Naive thymus-derived CD4-positive, alpha-beta T cell (primary cell): ENCODE measurements at regions of chr1 and their contacts with region 1.

Region 1: DNA sequence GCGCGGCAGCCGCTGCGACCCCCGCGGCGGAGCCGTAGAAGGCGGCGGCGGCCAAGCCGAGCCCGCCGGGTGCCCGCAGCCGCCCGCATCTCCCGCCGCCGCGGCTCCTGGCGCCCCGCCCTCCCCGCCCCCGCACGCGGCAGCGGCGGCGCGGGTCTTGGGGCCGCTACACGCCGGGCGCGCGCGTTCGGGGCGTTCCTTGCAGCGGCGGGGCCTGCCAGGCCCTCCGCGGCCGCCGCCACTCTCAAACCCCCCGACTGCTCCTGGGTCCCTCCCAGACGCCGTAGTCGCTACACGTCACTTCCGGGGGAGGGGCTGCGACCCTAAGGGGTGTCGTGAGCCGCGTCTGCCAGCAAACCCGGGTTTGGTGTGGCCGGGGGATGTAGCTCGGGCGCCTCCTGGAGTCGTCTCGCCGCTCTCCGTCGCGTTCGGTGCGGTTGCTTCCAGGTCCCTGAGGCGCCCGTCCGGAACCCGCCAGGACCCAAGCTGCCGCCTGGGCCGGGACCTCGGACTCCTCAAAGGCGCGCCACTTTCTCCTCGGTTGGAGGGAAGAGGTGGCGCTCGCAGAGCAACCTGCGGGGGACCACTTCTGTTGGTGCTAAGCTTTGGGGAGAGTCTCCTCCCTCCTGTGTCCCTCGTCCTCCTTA is at the start of gene ELK4:
- DNase-seq: peak; percentile 98 to 100 (median 99)
- ATAC-seq: peak; percentile 92
- H3K4me3 ChIP-seq: peak within 1 kb of the TSS; percentile 84
- H3K4me3 Mint-ChIP-seq: peak within 1 kb of the TSS; percentile 85 to 100 (median 94)
- H3K27ac ChIP-seq: peak within 1 kb of the TSS; percentile 95
- H3K27ac Mint-ChIP-seq: peak within 1 kb of the TSS; percentile 89 to 99 (median 97)
- H3K4me1 ChIP-seq: peaks cover 20 to 33% of the 10 kb centered on the region in 2 donors
- H3K4me1 Mint-ChIP-seq: peaks cover 23 to 51% (median 37%) of the 10 kb centered on the region in 7 donors
- H3K27me3 ChIP-seq: no peaks in the 10 kb centered on the region
- H3K27me3 Mint-ChIP-seq: peaks cover 0 to 7% (median 0%) of the 10 kb centered on the region in 5 donors
- total RNA-seq, gene ELK4: 104 to 250 (median 156) TPM

Region 2: DNA sequence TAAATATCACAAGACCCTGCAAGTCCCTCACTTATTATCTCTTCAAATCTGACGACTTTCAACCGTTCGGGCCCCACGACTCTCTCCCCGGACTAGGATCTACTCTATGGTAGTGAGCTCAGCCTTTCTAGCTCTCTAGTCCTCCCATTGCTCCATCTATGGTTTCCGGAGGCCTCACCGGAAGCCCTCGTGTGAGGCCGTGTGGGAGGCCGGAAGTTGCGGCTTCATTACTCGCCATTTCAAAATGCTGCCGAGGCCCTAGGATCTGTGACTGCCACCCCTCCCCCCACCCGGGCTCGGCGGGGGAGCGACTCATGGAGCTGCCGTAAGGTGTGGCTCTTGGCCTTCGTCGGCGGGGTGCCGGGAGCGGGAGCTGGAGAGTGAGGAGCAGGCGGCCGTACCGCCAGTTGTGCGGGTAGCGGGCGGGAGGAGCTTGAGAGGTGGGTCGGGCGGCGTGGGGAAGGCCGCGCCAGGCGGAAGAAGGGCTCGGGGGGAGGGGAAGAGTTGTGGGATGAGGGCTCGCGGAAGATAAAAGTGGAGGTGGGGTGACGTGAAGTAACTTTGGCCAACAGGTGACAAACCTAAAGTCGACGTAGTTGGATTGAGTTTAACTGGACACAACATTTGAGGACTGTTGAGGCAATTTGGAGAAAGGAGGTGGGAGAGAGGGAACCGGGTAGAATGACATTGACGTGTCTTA is 1115.5 kb before region 1 on chr1 and contains the start of gene MDM4:
- CTCF ChIA-PET with region 1: no interaction called
- POLR2A ChIA-PET with region 1: interaction called, 4 read pairs
- intact Hi-C with region 1: loop called in 1 of 2 experiments (anchors 10 kb)
- DNase-seq: peak; percentile 86 to 94 (median 93)
- ATAC-seq: peak; percentile 87
- H3K4me3 ChIP-seq: peak within 1 kb of the TSS; percentile 91
- H3K4me3 Mint-ChIP-seq: peak within 1 kb of the TSS in 1 of 10 donors; percentile 87
- H3K27ac ChIP-seq: peak within 1 kb of the TSS; percentile 95
- H3K27ac Mint-ChIP-seq: peak within 1 kb of the TSS in 6 of 9 donors; percentile 68 to 98 (median 80)
- H3K4me1 ChIP-seq: peaks cover 64 to 67% of the 10 kb centered on the region in 2 donors
- H3K4me1 Mint-ChIP-seq: peaks cover 32 to 78% (median 66%) of the 10 kb centered on the region in 7 donors
- H3K27me3 ChIP-seq: no peaks in the 10 kb centered on the region
- H3K27me3 Mint-ChIP-seq: no peaks in the 10 kb centered on the region
- total RNA-seq, gene MDM4: 107 to 278 (median 268) TPM

Region 3: DNA sequence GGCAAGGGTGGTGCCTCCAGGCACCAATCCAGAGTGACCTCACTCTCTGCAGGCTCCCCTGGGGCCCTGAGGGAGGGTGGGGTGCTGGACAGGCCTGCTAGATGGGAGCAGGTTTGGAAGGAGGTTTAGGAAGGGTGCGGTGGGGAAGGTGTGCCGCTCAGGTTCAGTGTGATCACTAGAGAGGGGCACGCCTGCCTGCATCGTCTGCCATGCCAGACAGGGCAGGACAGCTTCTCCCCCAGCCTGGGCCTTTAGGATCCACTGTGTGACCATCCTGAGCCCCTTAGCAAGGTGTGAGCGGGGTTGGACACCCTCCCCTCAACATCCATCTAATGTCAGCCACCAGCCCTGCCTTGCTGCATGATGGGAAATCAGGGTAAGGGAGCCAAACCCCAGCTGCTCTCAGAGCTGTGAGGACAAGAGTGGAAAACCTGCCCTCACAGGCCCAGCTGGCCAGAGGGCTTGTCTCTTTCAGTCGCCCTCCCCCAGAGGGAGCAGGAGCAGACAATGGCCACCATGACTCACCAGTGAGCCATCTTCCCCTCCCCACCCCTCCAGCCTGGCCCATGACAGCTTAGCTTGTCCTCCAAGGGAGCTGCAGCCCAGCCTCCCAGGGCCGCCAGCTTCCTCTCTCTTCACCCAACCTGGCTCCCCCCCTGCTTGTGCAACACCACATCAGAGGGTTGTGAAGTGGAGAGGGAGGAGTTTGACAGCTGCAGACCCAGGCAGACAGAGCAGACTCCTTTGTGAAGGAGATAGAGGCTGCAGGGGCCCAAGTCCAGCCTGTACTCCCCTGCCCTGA is 347.3 kb before region 1 on chr1:
- CTCF ChIA-PET with region 1: no interaction called
- POLR2A ChIA-PET with region 1: interaction called, 3 read pairs
- intact Hi-C with region 1: loop called (anchors 1 to 2 kb)
- DNase-seq: peak; percentile 65 to 92 (median 89)
- ATAC-seq: peak; percentile 79
- H3K4me3 ChIP-seq: peak overlapping the region; percentile 51
- H3K4me3 Mint-ChIP-seq: peak overlapping the region; percentile 63 to 89 (median 80)
- H3K27ac ChIP-seq: peak overlapping the region; percentile 83
- H3K27ac Mint-ChIP-seq: peak overlapping the region; percentile 90 to 99 (median 97)
- H3K4me1 ChIP-seq: peaks cover 61 to 78% of the 10 kb centered on the region in 2 donors
- H3K4me1 Mint-ChIP-seq: peaks cover 67 to 95% (median 80%) of the 10 kb centered on the region in 7 donors
- H3K27me3 ChIP-seq: no peaks in the 10 kb centered on the region
- H3K27me3 Mint-ChIP-seq: peaks cover 0 to 20% (median 0%) of the 10 kb centered on the region in 5 donors

Region 4: GRCh38 chr1:205610036-205610435 is 21.8 kb before region 1 on chr1:
- CTCF ChIA-PET with region 1: interaction called, 4 read pairs
- POLR2A ChIA-PET with region 1: interaction called, 9 read pairs
- intact Hi-C with region 1: loop called in 1 of 2 experiments (anchors 1 kb)
- DNase-seq: no peak
- ATAC-seq: no peak
- H3K4me3 ChIP-seq: no peak overlapping the region
- H3K4me3 Mint-ChIP-seq: peak overlapping the region in 1 of 10 donors; percentile 50
- H3K27ac ChIP-seq: no peak overlapping the region
- H3K27ac Mint-ChIP-seq: peak overlapping the region in 6 of 9 donors; percentile 12 to 87 (median 52)
- H3K4me1 ChIP-seq: peaks cover 12 to 22% of the 10 kb centered on the region in 2 donors
- H3K4me1 Mint-ChIP-seq: peaks cover 20 to 71% (median 57%) of the 10 kb centered on the region in 7 donors
- H3K27me3 ChIP-seq: no peaks in the 10 kb centered on the region
- H3K27me3 Mint-ChIP-seq: no peaks in the 10 kb centered on the region

Region 5: DNA sequence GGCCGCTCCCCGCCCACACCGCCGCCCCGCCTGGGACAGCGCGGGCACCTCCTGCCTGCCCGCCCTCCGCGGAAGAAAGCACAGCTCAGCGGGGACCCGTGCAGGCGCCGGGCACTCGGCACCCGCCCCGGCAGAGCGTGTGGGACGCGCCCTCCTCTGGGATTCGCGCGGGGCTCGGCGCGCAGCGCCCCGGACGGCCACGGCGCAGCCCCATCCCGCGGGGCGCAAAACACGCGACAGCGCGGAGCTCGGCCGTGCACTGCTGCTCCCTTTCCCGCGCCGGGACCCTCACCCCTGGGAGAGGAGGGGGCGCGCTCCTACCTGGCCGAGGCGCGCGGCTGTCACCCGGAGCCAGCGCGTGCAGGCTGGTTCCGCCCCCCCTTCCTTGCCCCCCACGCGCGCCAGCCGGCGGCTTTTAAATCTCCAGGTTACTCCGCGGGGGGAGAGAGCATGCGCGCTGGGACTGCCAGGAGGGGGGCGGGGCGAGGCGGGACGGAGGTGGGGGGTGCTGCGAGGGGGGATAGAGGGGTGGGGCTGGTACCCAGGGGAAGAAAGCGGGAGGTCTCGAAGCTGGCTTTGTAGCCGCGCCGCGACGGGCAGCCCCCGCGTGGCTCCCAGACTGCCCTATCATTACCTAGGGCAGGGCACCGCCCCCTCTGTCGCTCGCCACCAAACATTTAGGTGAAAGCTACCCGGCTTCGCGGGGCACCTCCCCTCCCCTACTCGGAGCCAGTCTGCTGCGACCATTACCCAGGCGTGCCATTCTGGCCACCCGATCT is 48.4 kb after region 1 on chr1 and contains the start of gene SLC45A3:
- CTCF ChIA-PET with region 1: no interaction called
- POLR2A ChIA-PET with region 1: no interaction called
- intact Hi-C with region 1: loop called in 1 of 2 experiments (anchors 2 kb)
- DNase-seq: peak in 6 of 9 donors; percentile 4 to 55 (median 20)
- ATAC-seq: peak; percentile 69
- H3K4me3 ChIP-seq: peak within 1 kb of the TSS; percentile 42
- H3K4me3 Mint-ChIP-seq: peak within 1 kb of the TSS; percentile 77 to 88 (median 80)
- H3K27ac ChIP-seq: no peak within 1 kb of the TSS
- H3K27ac Mint-ChIP-seq: peak within 1 kb of the TSS in 2 of 9 donors; percentile 8 to 22
- H3K4me1 ChIP-seq: peaks cover 4 to 10% of the 10 kb centered on the region in 2 donors
- H3K4me1 Mint-ChIP-seq: peaks cover 5 to 15% (median 13%) of the 10 kb centered on the region in 7 donors
- H3K27me3 ChIP-seq: peaks cover 0 to 4% of the 10 kb centered on the region in 2 donors
- H3K27me3 Mint-ChIP-seq: peaks cover 12 to 36% (median 22%) of the 10 kb centered on the region in 5 donors
- total RNA-seq, gene SLC45A3: 0.10 to 8.7 (median 0.54) TPM

Region 6: GRCh38 chr1:205849619-205850355 is 217.9 kb after region 1 on chr1 and contains the start of gene PM20D1:
- CTCF ChIA-PET with region 1: no interaction called
- POLR2A ChIA-PET with region 1: no interaction called
- intact Hi-C with region 1: loop called in 1 of 2 experiments (anchors 1 kb)
- DNase-seq: peak; percentile 48 to 90 (median 85)
- ATAC-seq: peak; percentile 98
- H3K4me3 ChIP-seq: peak within 1 kb of the TSS; percentile 31
- H3K4me3 Mint-ChIP-seq: peak within 1 kb of the TSS; percentile 83 to 98 (median 96)
- H3K27ac ChIP-seq: peak within 1 kb of the TSS; percentile 67
- H3K27ac Mint-ChIP-seq: peak within 1 kb of the TSS; percentile 82 to 99 (median 94)
- H3K4me1 ChIP-seq: no peaks in the 10 kb centered on the region
- H3K4me1 Mint-ChIP-seq: peaks cover 0 to 19% (median 7%) of the 10 kb centered on the region in 7 donors
- H3K27me3 ChIP-seq: no peaks in the 10 kb centered on the region
- H3K27me3 Mint-ChIP-seq: peaks cover 0 to 8% (median 0%) of the 10 kb centered on the region in 5 donors
- total RNA-seq, gene PM20D1: 0.92 to 2.7 (median 1.9) TPM

Region 7: GRCh38 chr1:207346562-207346912 is 1714.7 kb after region 1 on chr1:
- CTCF ChIA-PET with region 1: no interaction called
- POLR2A ChIA-PET with region 1: no interaction called
- intact Hi-C with region 1: no loop called
- DNase-seq: no peak
- ATAC-seq: peak; percentile 53
- H3K4me3 ChIP-seq: no peak overlapping the region
- H3K4me3 Mint-ChIP-seq: peak overlapping the region in 4 of 10 donors; percentile 3 to 68 (median 38)
- H3K27ac ChIP-seq: no peak overlapping the region
- H3K27ac Mint-ChIP-seq: peak overlapping the region in 2 of 9 donors; percentile 6 to 18
- H3K4me1 ChIP-seq: peaks cover 0 to 60% of the 10 kb centered on the region in 2 donors
- H3K4me1 Mint-ChIP-seq: peaks cover 62 to 98% (median 94%) of the 10 kb centered on the region in 7 donors
- H3K27me3 ChIP-seq: no peaks in the 10 kb centered on the region
- H3K27me3 Mint-ChIP-seq: no peaks in the 10 kb centered on the region